PC-3 (cell line): ENCODE measurements at regions of chr9 and their contacts with region 1.

Region 1: GRCh38 chr9:33466565-33467495 is 6.9 kb downstream of the NOL6 start:
- DNase-seq: peak; percentile 59
- ATAC-seq: peak; percentile 66
- H3K4me3 ChIP-seq: no peak overlapping the region
- H3K27ac ChIP-seq: no peak overlapping the region
- H3K4me1 ChIP-seq: peaks cover 5% of the 10 kb centered on the region
- H3K27me3 ChIP-seq: no peaks in the 10 kb centered on the region
- CTCF ChIP-seq: peak; percentile 80

Region 2: DNA sequence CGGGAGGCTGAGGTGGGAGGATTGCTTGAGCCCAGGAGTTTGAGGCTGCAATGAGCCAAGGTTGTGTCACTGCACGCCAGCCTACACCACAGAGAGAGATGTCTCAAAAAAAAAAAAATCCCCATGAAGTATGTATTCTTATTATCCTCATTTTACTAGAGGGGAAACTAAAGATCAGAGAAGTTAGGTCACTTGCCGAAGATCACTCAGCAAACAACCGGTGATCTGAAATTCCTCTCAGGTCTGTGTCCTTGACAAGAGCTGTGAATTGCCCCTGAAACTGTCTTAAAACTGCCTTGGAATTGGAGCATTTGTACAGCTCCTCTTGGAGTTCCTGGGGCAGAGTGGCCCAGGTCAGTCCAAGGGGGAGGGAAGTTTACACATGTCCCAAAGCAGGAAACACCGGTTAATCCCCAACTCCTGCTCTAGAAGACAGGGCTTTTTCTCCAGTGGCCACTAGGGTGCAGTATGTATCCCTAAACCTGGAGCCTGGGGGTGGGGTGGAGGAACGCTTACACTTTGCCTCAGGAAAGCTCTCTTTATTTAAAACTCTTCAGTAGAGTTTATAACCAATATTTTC is 92.1 kb before region 1 on chr9:
- CTCF ChIA-PET with region 1: interaction called, 12 read pairs
- POLR2A ChIA-PET with region 1: no interaction called
- intact Hi-C with region 1: no loop called
- DNase-seq: peak; percentile 79
- ATAC-seq: peak; percentile 90
- H3K4me3 ChIP-seq: no peak overlapping the region
- H3K27ac ChIP-seq: no peak overlapping the region
- H3K4me1 ChIP-seq: peaks cover 9% of the 10 kb centered on the region; the same call in 1 of the 2 replicates
- H3K27me3 ChIP-seq: no peaks in the 10 kb centered on the region
- CTCF ChIP-seq: peak; percentile 78

Region 3: DNA sequence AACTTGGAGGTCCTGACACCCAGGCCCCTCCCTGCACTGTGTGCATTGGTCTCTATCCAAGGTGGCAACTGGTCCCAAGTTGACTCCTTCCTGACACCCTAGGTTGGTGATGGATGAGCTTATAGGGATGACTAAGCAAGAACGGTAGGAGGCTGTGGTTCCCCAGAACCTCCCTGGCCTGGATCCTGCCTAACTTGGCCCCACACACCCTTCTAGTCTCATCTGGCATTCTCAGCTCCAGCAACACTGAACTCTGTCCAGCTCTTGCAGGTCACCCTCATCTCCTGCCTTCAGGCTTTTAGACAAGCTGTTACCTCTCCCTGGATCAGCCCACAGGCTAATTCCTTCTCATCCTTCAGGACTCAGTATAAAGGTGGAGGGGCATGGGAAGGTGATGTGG is 35.9 kb before region 1 on chr9:
- CTCF ChIA-PET with region 1: no interaction called
- POLR2A ChIA-PET with region 1: interaction called, 10 read pairs
- intact Hi-C with region 1: no loop called
- DNase-seq: no peak
- ATAC-seq: no peak
- H3K4me3 ChIP-seq: no peak overlapping the region
- H3K27ac ChIP-seq: no peak overlapping the region
- H3K4me1 ChIP-seq: peaks cover 24% of the 10 kb centered on the region
- H3K27me3 ChIP-seq: no peaks in the 10 kb centered on the region
- CTCF ChIP-seq: no peak

Region 4: GRCh38 chr9:34025062-34025461 is 558.2 kb after region 1 on chr9:
- CTCF ChIA-PET with region 1: no interaction called
- POLR2A ChIA-PET with region 1: no interaction called
- intact Hi-C with region 1: no loop called
- DNase-seq: no peak
- ATAC-seq: no peak
- H3K4me3 ChIP-seq: no peak overlapping the region
- H3K27ac ChIP-seq: no peak overlapping the region
- H3K4me1 ChIP-seq: no peaks in the 10 kb centered on the region
- H3K27me3 ChIP-seq: no peaks in the 10 kb centered on the region
- CTCF ChIP-seq: no peak